AG04449 (cell line): ENCODE measurements at regions of chr5 and their contacts with region 1.

Region 1: DNA sequence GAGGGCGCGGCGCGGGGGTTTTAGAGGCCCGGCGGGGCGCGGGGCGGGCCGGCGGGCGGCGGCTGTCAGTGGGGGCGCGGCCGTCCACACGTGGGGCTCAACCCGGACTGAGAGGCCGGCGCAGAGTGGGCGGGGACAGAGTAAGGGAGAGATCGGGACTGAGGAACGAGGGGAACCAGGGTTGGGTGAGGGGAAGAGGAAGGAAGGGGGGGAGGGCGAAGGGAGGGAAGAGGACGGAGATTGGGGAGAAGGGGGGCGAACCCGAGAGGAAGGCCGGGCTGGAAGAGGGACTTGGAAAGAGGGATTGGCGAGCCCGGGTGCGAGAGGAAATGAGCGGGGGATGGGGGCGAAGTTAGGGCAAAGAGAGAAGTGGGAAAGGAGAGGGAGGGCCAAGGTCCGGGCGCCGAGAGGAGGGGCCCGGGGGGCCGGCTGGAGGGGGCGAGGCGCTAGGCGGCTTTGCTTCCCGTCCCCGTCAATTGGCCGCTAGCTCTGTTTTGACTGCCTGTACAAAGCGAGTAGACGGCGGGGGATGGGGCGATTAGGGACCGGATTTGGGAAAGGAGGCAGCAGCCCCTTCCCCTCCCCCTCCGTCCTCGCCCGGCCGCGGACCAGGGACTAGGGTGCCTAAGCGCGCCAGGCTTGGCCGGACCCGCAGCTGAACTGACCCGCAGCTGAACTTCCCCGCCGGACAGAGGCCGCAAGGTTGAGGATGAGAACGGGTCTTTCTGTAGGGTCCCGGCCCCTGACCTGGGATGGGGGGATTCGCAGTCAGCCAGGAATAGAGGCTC is 399 bp upstream of the FBN2 start:
- DNase-seq: peak; percentile 55
- H3K4me3 ChIP-seq: peak overlapping the region; percentile 91
- CTCF ChIP-seq: no peak

Region 2: DNA sequence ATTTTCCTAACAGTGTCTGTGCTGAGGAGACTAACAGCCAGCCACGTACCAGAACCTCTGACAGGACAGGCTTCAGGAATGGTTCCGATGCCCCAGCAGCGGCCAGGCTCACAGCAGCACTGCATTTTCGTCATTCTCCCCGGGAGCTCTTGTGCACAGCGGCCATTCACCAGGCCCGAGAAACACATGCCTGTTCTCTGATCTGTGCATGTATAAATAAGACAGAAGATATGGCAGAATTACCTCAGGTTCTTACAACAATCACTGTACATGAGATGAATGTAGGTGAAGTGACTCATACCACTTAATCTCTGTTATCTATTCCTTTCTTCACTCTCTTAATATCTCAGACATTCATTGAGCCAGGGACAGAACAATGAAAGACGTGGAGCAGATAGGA is 143.4 kb before region 1 on chr5:
- CTCF ChIA-PET with region 1: no interaction called
- POLR2A ChIA-PET with region 1: no interaction called
- DNase-seq: no peak
- H3K4me3 ChIP-seq: no peak overlapping the region
- CTCF ChIP-seq: no peak

Region 3: GRCh38 chr5:128436749-128437188 is 101.7 kb before region 1 on chr5:
- CTCF ChIA-PET with region 1: no interaction called
- POLR2A ChIA-PET with region 1: no interaction called
- DNase-seq: peak; percentile 56
- H3K4me3 ChIP-seq: no peak overlapping the region
- CTCF ChIP-seq: no peak

Region 4: GRCh38 chr5:128644863-128645262 is 106.4 kb after region 1 on chr5:
- CTCF ChIA-PET with region 1: interaction called, 4 read pairs
- POLR2A ChIA-PET with region 1: interaction called, 21 read pairs
- DNase-seq: no peak
- H3K4me3 ChIP-seq: peak overlapping the region; percentile 20
- CTCF ChIP-seq: no peak